A673 (cell line): ENCODE measurements at regions of chr3 and their contacts with region 1.

Region 1: GRCh38 chr3:112531358-112531781 is 30.4 kb downstream of the ATG3 start:
- DNase-seq: peak; percentile 52
- H3K4me3 ChIP-seq: no peak overlapping the region
- H3K27ac ChIP-seq: no peak overlapping the region
- H3K4me1 ChIP-seq: no peaks in the 10 kb centered on the region
- H3K27me3 ChIP-seq: no peaks in the 10 kb centered on the region
- CTCF ChIP-seq: peak; percentile 70

Region 2: GRCh38 chr3:111761309-111761831 is 770.0 kb before region 1 on chr3:
- CTCF ChIA-PET with region 1: no interaction called
- POLR2A ChIA-PET with region 1: no interaction called
- intact Hi-C with region 1: no loop called
- DNase-seq: peak; percentile 26
- H3K4me3 ChIP-seq: no peak overlapping the region
- H3K27ac ChIP-seq: no peak overlapping the region
- H3K4me1 ChIP-seq: no peaks in the 10 kb centered on the region
- H3K27me3 ChIP-seq: no peaks in the 10 kb centered on the region
- CTCF ChIP-seq: no peak

Region 3: GRCh38 chr3:112293368-112294321 is 237.7 kb before region 1 on chr3 and contains the start of gene SLC9C1:
- CTCF ChIA-PET with region 1: interaction called, 5 read pairs
- POLR2A ChIA-PET with region 1: no interaction called
- intact Hi-C with region 1: loop called (anchors 5 kb)
- DNase-seq: peak; percentile 77
- H3K4me3 ChIP-seq: peak within 1 kb of the TSS; percentile 12
- H3K27ac ChIP-seq: no peak within 1 kb of the TSS
- H3K4me1 ChIP-seq: peaks cover 4% of the 10 kb centered on the region
- H3K27me3 ChIP-seq: no peaks in the 10 kb centered on the region
- CTCF ChIP-seq: peak; percentile 76
- total RNA-seq, gene SLC9C1: not detected in 2 replicates

Region 4: DNA sequence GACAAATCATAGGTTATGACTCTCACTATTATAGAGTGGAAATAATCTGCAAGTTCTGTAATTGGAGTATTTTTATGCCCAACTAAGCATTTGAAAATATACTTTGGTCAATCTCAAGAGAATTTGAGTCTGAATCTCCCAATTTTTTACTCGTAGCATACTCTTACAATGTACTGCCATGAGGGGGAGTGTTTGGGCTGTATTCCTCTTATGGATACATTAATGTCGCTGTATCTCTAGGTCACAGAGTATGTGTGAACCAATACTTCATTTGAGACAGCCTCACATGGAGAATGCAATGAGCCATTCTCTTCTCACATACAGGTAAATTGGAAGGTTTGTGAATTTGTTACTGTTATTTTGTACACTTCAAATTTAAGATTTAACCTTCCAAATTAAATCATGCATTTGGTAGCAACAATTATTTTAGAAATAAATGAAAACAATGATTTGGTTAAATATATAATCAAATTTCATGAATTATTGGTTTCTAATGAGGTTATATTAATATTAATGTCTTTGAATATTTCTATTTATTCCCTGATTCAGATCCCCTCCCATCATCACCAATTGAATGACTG is 203.9 kb before region 1 on chr3:
- CTCF ChIA-PET with region 1: no interaction called
- POLR2A ChIA-PET with region 1: no interaction called
- intact Hi-C with region 1: no loop called
- DNase-seq: peak; percentile 68
- H3K4me3 ChIP-seq: no peak overlapping the region
- H3K27ac ChIP-seq: no peak overlapping the region
- H3K4me1 ChIP-seq: no peaks in the 10 kb centered on the region
- H3K27me3 ChIP-seq: peaks cover 14% of the 10 kb centered on the region
- CTCF ChIP-seq: peak; percentile 68

Region 5: DNA sequence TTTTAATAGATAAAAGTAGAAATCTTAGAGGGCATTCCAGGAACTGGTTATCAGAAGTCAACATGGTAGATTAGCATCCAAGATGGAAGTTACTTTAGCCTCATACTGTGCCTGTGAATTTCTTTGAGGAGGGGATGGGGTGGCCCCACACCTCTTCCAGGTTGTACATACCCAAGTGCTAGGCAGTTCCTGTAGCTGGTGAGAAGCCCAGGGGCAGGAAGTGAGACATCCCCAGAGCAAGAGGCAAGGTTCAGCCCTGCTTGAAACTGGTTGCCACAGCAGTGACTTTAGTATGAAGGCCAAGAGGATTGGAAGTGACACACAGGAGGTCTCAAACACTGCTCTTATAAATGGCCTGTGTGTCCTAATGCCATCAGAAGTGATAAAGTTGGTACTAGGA is 471.3 kb after region 1 on chr3:
- CTCF ChIA-PET with region 1: interaction called, 12 read pairs
- POLR2A ChIA-PET with region 1: no interaction called
- intact Hi-C with region 1: no loop called
- DNase-seq: no peak
- H3K4me3 ChIP-seq: no peak overlapping the region
- H3K27ac ChIP-seq: no peak overlapping the region
- H3K4me1 ChIP-seq: peaks cover 22% of the 10 kb centered on the region
- H3K27me3 ChIP-seq: no peaks in the 10 kb centered on the region
- CTCF ChIP-seq: no peak